ENCODE measurements at regions of chr3 and their contacts with region 1.

Region 1: DNA sequence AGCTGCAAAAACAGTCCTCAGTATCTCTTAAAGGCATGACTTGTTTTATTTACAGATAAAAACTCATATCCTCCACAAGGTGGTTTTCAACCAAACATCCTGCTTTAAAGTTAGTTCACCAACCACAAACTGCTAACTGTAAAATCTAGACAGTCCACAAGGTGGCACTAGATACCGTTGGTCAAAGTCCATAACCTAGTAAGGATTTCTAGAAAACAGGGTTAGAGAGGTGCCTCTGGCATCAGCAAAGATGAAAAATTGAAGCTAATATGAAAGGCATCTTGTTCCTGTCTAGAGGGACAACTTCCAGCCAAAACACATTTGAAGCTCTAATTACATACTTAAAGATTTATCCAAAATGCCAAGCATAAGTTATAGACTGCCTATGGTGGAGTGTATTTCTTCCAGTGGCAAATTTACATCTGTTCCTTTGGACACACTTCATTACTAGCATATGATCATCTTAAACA is 56.0 kb downstream of the ZMAT3 start:
- DNase-seq: peak; percentile 86
- H3K4me3 ChIP-seq: no peak overlapping the region
- H3K27ac ChIP-seq: no peak overlapping the region
- H3K4me1 ChIP-seq: peaks cover 6% of the 10 kb centered on the region
- H3K27me3 ChIP-seq: no peaks in the 10 kb centered on the region
- CTCF ChIP-seq: peak; percentile 59 to 62
- POLR2A ChIP-seq: no peak

Region 2: DNA sequence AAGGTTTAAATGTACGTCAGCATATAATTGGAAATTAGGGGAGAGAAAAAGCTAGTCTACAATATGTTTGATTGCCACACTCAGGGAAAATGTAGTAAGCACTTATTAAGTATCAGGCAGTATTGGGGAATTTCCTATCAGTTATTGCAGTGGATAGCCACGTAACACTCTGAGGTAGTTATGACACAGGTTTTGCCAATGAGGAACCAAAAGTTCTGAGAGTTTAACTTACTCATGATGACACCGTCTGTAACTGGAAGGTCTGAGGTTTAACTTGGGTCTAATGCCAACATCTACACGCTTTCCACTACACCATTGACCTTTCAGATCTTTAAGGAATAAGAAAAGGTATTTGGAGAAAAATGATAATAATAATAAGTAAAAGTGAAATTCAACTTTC is 33.4 kb before region 1 on chr3:
- CTCF ChIA-PET with region 1: no interaction called
- POLR2A ChIA-PET with region 1: no interaction called
- dilution Hi-C with region 1: no loop called
- intact Hi-C with region 1: no loop called
- DNase-seq: no peak
- H3K4me3 ChIP-seq: no peak overlapping the region
- H3K27ac ChIP-seq: no peak overlapping the region
- H3K4me1 ChIP-seq: no peaks in the 10 kb centered on the region
- H3K27me3 ChIP-seq: no peaks in the 10 kb centered on the region
- CTCF ChIP-seq: no peak
- POLR2A ChIP-seq: no peak

Region 3: GRCh38 chr3:179071550-179072397 is 56.2 kb after region 1 on chr3 and contains the start of gene ZMAT3:
- CTCF ChIA-PET with region 1: interaction called, 6 read pairs
- POLR2A ChIA-PET with region 1: no interaction called
- dilution Hi-C with region 1: no loop called
- intact Hi-C with region 1: loop called (anchors 1 kb)
- DNase-seq: peak; percentile 93
- H3K4me3 ChIP-seq: peak within 1 kb of the TSS; percentile 18 to 56 (median 53)
- H3K27ac ChIP-seq: peak within 1 kb of the TSS; percentile 81
- H3K4me1 ChIP-seq: peaks cover 10% of the 10 kb centered on the region
- H3K27me3 ChIP-seq: no peaks in the 10 kb centered on the region
- CTCF ChIP-seq: no peak
- POLR2A ChIP-seq: peak; percentile 89
- total RNA-seq, gene ZMAT3: 33.1 and 35.5 TPM in 2 replicates

Region 4: DNA sequence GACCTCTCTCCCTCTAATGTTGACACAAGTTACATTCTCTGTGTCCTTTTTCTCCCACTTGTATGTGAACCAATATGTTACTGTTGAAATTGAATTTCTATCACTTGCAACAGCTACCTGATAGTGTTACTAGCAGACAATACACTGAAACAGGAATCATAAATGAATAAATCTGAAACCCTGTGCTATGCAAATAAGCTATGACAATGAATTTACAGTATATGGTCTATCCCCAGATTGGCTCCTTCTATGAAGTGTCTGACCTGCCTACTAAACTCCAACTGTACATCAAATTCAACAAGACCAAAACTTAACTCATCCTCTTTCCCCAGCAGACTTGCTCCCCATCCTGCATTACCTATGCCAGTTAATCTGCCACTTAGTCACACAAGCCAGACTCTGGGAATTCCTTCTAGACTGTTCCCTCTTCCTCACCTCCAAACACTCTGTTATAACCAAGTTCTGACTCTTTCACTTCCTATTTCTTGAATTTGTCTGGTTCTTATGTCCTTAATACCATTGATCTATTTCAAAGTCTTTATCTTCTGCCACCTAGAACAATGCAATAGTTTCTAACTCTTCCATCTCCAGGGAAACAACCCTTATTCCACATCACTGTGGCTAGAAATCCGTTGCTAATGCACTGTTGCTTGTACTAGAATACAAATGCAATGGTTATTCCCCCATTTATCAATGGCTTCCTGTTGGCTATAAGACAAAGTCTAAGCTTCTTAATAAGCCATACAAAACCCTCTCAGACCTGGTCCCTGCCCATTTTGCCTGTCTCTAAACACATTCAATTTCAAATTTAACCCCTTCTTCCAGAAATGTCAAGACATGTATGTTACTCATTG is 293.9 kb after region 1 on chr3:
- CTCF ChIA-PET with region 1: interaction called, 33 read pairs
- POLR2A ChIA-PET with region 1: no interaction called
- dilution Hi-C with region 1: no loop called
- intact Hi-C with region 1: no loop called
- DNase-seq: no peak
- H3K4me3 ChIP-seq: no peak overlapping the region
- H3K27ac ChIP-seq: no peak overlapping the region
- H3K4me1 ChIP-seq: no peaks in the 10 kb centered on the region
- H3K27me3 ChIP-seq: no peaks in the 10 kb centered on the region
- CTCF ChIP-seq: no peak
- POLR2A ChIP-seq: no peak

Measured in endothelial cell of umbilical vein (primary cell).